ENCODE measurements at regions of chr18 and their contacts with region 1.

Region 1: DNA sequence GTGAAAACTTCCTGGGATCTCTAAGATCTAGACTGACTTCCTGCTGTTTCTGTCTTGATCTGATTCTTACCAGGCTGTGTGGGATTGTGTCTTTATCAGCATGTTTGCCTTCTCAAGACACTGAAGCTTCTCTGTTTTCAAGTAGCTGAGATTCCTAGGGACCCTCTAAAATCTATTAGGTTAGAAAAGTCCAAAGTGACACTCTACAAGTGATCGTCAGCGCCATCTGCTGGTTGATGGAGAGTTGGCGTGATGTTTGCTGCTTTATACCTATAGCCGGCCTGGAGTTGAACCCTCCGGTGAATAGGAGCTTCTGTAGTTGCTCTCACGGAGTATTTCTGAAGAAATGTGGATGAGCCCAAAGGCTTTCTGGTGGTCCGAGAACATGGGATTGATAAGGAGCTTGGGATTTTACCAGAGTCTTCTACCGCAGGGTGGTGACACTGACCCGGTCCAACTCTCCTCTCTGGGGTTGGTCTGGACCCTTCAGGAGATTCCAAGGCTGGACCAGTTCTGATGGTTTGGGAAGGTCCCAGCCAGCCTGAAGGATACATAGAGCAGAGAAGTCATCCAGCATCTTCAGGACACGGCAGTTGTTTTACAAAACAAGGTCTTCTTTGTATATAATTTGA is 96.0 kb upstream of the TTC39C start:
- DNase-seq: peak; percentile 84
- H3K4me3 Mint-ChIP-seq: no peak overlapping the region
- H3K27ac Mint-ChIP-seq: peak overlapping the region; percentile 57
- H3K4me1 Mint-ChIP-seq: peaks cover 18% of the 10 kb centered on the region
- H3K27me3 Mint-ChIP-seq: no peaks in the 10 kb centered on the region
- CTCF ChIP-seq: peak; percentile 74

Region 2: GRCh38 chr18:23719634-23720201 is 198.8 kb before region 1 on chr18:
- CTCF ChIA-PET with region 1: no interaction called
- POLR2A ChIA-PET with region 1: no interaction called
- intact Hi-C with region 1: loop called (anchors 5 kb)
- DNase-seq: peak; percentile 92
- H3K4me3 Mint-ChIP-seq: no peak overlapping the region
- H3K27ac Mint-ChIP-seq: peak overlapping the region; percentile 83
- H3K4me1 Mint-ChIP-seq: peaks cover 49% of the 10 kb centered on the region
- H3K27me3 Mint-ChIP-seq: no peaks in the 10 kb centered on the region
- CTCF ChIP-seq: no peak

Region 3: DNA sequence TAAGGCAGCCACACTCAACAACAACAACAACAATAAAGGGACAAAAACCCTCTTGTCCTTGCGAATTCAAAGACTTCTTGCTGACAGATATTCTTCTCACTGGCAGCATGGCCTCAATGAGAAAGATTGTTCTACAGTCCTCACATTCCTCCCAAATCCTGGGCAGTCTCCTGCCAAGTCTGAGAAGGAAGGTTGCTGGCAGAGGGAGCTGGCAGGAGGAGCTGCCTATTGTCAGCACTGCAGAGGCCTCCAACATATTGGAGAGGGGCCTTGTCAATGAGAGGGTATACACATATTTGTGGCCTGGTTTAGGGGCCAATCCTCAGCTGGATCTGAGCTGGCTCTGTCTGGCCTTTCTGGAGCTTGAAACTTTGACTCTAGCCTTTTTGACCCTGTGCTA is 165.7 kb before region 1 on chr18:
- CTCF ChIA-PET with region 1: no interaction called
- POLR2A ChIA-PET with region 1: no interaction called
- intact Hi-C with region 1: no loop called
- DNase-seq: no peak
- H3K4me3 Mint-ChIP-seq: no peak overlapping the region
- H3K27ac Mint-ChIP-seq: no peak overlapping the region
- H3K4me1 Mint-ChIP-seq: no peaks in the 10 kb centered on the region
- H3K27me3 Mint-ChIP-seq: no peaks in the 10 kb centered on the region
- CTCF ChIP-seq: no peak

Region 4: GRCh38 chr18:23828426-23828825 is 90.1 kb before region 1 on chr18:
- CTCF ChIA-PET with region 1: interaction called, 4 read pairs
- POLR2A ChIA-PET with region 1: interaction called, 4 read pairs
- intact Hi-C with region 1: loop called (anchors 1 kb)
- DNase-seq: peak; percentile 84
- H3K4me3 Mint-ChIP-seq: peak overlapping the region; percentile 48
- H3K27ac Mint-ChIP-seq: peak overlapping the region; percentile 90
- H3K4me1 Mint-ChIP-seq: peaks cover 45% of the 10 kb centered on the region
- H3K27me3 Mint-ChIP-seq: no peaks in the 10 kb centered on the region
- CTCF ChIP-seq: no peak

Region 5: DNA sequence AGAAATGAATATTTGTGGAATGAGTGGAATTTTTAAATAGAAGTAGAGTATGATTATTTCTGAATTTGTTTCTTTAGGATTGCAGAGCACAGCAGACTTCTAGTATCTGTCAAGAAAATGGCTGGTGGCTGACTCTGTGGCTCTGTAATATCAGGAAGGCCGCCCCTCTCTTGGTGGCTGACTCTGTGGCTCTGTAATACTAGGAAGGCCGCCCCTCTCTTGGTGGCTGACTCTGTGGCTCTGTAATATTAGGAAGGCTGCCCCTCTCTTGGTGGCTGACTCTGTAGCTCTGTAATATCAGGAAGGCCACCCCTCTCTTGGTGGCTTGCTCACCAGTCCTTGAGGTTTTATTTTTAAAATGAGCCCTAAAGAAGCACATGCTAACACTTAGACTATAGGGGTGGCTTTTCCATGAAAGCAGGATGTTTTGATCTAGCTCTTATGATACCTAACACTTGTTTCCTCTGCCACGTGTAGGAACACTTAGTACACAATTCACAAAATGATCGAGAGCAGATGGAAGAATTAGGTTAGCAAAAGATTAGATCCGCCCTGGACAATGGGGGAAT is 10.9 kb after region 1 on chr18:
- CTCF ChIA-PET with region 1: interaction called, 23 read pairs
- POLR2A ChIA-PET with region 1: interaction called, 3 read pairs
- intact Hi-C with region 1: no loop called
- DNase-seq: no peak
- H3K4me3 Mint-ChIP-seq: no peak overlapping the region
- H3K27ac Mint-ChIP-seq: no peak overlapping the region
- H3K4me1 Mint-ChIP-seq: no peaks in the 10 kb centered on the region
- H3K27me3 Mint-ChIP-seq: no peaks in the 10 kb centered on the region
- CTCF ChIP-seq: no peak